PC-3 (cell line): ENCODE measurements at regions of chr9 and their contacts with region 1.

Region 1: GRCh38 chr9:125904155-125904851 is 157.1 kb downstream of the PBX3 start:
- DNase-seq: peak; percentile 70
- ATAC-seq: peak; percentile 85
- H3K4me3 ChIP-seq: peak overlapping the region; percentile 45; the same call in 1 of the 2 replicates
- H3K27ac ChIP-seq: peak overlapping the region; percentile 62
- H3K4me1 ChIP-seq: peaks cover 34% of the 10 kb centered on the region
- H3K27me3 ChIP-seq: no peaks in the 10 kb centered on the region
- CTCF ChIP-seq: no peak

Region 2: DNA sequence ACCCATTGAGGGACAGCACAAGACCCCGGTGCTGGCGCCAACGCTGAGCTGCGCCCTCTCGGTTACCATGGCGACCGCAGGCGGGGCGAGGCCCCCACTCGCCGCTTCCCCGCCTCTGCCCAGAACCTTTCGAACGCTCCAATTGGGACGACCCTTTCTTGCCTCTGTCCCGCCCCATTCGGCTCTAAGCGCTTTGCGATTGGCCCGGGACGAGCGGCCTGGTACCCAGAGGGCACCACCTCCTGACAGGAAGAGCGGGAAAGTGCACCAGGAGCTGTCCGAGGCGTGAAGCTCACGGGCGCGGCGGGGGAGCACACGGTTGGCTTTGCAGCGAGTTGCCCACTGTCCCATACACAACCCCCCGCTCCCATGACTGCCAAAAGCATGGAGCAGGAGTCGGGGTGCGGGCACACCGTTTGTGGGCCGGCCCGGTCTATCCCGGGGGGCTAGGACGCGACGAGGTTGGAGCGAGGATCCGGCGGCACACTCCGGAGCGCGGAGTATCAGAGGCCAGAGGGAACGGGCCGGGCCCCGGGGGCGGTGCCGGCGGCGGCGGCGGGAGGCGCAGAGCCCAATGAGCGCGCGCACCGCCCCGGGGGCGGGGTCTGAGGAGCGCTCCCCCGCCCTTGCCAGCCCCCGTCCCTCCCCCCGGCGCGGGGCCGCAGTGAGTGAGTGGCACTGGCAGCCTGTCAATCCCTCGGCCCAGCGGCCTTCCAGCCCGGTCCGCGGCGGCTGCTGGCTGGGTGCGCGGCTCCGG is 158.1 kb before region 1 on chr9:
- CTCF ChIA-PET with region 1: interaction called, 3 read pairs
- POLR2A ChIA-PET with region 1: no interaction called
- intact Hi-C with region 1: loop called (anchors 5 kb)
- DNase-seq: peak; percentile 93
- ATAC-seq: peak; percentile 82
- H3K4me3 ChIP-seq: peak overlapping the region; percentile 61
- H3K27ac ChIP-seq: peak overlapping the region; percentile 39; the same call in 1 of the 2 replicates
- H3K4me1 ChIP-seq: peaks cover 31% of the 10 kb centered on the region
- H3K27me3 ChIP-seq: no peaks in the 10 kb centered on the region
- CTCF ChIP-seq: no peak

Region 3: GRCh38 chr9:125861405-125862058 is 42.8 kb before region 1 on chr9:
- CTCF ChIA-PET with region 1: no interaction called
- POLR2A ChIA-PET with region 1: no interaction called
- intact Hi-C with region 1: no loop called
- DNase-seq: no peak
- ATAC-seq: no peak
- H3K4me3 ChIP-seq: no peak overlapping the region
- H3K27ac ChIP-seq: no peak overlapping the region
- H3K4me1 ChIP-seq: no peaks in the 10 kb centered on the region
- H3K27me3 ChIP-seq: no peaks in the 10 kb centered on the region
- CTCF ChIP-seq: no peak

Region 4: DNA sequence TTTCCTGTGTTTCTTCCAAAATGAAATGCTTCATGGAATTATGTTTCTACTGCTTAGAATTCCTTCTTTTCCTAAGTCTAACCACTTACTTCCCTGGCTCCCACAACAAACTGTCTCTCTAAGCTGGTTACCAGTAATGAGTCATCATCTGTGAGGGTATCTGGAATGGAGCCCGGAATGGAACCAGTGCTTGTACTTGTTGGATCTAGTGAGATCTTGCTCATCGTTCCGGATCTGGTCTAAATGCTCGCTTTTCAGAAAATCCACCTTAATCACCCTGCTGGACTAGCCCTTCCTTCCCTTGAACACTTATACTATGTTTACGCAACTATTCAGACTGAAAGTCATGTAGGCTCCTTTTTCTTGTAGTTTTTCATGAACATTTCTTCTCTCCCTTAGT is 27.7 kb after region 1 on chr9:
- CTCF ChIA-PET with region 1: no interaction called
- POLR2A ChIA-PET with region 1: no interaction called
- intact Hi-C with region 1: loop called (anchors 1 kb)
- DNase-seq: peak; percentile 96
- ATAC-seq: peak; percentile 96
- H3K4me3 ChIP-seq: no peak overlapping the region
- H3K27ac ChIP-seq: peak overlapping the region; percentile 64
- H3K4me1 ChIP-seq: peaks cover 17% of the 10 kb centered on the region
- H3K27me3 ChIP-seq: no peaks in the 10 kb centered on the region
- CTCF ChIP-seq: no peak

Region 5: GRCh38 chr9:126108240-126108639 is 203.9 kb after region 1 on chr9:
- CTCF ChIA-PET with region 1: no interaction called
- POLR2A ChIA-PET with region 1: no interaction called
- intact Hi-C with region 1: no loop called
- DNase-seq: no peak
- ATAC-seq: no peak
- H3K4me3 ChIP-seq: no peak overlapping the region
- H3K27ac ChIP-seq: no peak overlapping the region
- H3K4me1 ChIP-seq: no peaks in the 10 kb centered on the region
- H3K27me3 ChIP-seq: peaks cover 8% of the 10 kb centered on the region; the same call in 1 of the 2 replicates
- CTCF ChIP-seq: no peak